ENCODE measurements at regions of chr19 and their contacts with region 1.

Region 1: DNA sequence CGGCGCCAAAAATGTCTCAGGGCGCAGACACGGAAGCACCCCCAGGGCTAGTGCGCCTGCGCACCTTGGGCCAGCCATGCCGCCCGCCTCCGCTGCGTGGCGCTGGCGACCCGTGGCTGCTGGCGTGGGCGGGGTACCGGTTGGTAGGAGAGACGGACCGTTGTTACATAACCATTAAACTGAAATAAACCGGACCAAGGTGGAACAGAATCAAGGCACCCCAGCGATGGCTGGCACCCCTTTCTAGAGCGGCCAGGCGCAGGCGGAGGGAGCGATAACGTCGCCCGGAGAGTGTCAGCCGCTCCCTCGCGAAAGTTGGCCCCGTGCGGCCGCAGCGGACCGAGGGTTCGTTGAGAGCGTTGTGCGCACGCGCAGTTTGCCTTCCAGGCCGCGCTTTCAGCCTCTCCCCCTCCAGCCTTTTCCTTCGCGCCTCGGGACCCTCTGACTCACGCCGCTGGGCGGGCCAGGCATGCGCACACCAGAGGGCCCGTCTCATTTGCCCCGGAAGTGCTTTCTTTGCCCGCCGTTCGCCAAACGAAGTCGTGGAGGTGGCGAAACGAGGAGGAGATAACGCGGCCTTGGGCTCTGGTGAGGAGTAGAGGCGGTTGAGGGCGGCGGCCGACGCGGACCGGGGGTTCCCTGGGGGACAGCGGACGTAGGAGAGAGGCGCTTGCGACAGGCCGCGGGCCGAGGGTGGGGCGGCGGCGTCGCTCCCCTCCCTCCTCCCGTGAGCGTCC is at the starts of genes PLEKHJ1 and SF3A2:
- DNase-seq: peak; percentile 85 to 95 (median 92)
- H3K4me3 ChIP-seq: peak within 1 kb of the TSS; percentile 64 to 99 (median 94)
- H3K27ac ChIP-seq: peak within 1 kb of the TSS; percentile 97 to 100 (median 100)
- H3K27me3 ChIP-seq: no peaks in the 10 kb centered on the region
- CTCF ChIP-seq: peak; percentile 86 to 100 (median 96)
- total RNA-seq, gene PLEKHJ1: 32.8 to 66.7 (median 46.1) TPM
- total RNA-seq, gene SF3A2: 27.0 to 68.4 (median 48.2) TPM

Region 2: GRCh38 chr19:2096480-2097329 is 139.8 kb before region 1 on chr19 and contains the start of gene IZUMO4:
- intact Hi-C with region 1: loop called in 1 of 2 experiments (anchors 2 kb)
- DNase-seq: peak; percentile 97 to 100 (median 99)
- H3K4me3 ChIP-seq: peak within 1 kb of the TSS; percentile 62 to 100 (median 83)
- H3K27ac ChIP-seq: peak within 1 kb of the TSS; percentile 83 to 99 (median 96)
- H3K27me3 ChIP-seq: no peaks in the 10 kb centered on the region
- CTCF ChIP-seq: peak in 53 of 56 donors; percentile 19 to 66 (median 48)
- total RNA-seq, gene IZUMO4: 8.6 to 54.6 (median 25.5) TPM

Region 3: DNA sequence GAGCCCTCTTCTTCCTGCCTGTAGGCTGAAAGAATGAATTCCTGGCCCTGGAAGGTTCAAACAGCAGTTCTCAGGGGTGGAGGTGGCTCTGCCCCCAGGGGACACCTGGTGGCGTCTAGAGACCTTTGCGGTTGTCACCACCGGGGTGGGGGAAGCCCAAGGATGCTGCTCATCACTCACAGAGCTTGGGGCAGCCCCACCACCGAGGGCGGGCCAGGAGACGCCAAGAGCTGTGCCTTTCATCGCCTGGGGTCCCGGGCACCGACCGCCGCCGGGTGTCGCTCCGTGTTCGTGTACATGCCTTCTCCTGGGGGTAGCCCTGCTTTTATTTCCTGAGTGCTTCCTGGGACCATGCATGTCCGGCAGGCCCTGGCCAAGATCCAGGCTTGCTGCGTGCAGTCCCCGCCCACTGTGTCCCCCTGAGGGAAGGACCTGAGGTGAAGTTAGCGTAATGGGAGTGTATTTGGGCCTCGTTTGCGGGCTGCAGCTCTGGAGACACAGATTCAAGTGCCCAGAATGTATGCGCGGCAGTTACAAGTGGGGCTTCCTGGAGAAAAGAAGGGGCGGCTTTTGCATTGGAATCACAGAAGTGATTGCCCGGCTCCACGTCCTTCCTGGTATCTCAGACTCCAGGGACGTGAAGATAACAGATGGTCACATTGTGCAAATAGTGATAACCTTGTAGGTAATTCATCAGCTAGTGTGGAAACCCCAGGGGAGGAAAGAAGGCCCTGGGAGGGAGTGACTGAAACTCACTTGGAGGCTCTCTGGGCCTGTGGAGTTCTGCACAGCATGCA is 64.9 kb before region 1 on chr19:
- intact Hi-C with region 1: loop called in 1 of 2 experiments (anchors 5 kb)
- DNase-seq: no peak
- H3K4me3 ChIP-seq: no peak overlapping the region
- H3K27ac ChIP-seq: peak overlapping the region in 2 of 59 donors; percentile 15 to 21
- H3K27me3 ChIP-seq: no peaks in the 10 kb centered on the region
- CTCF ChIP-seq: no peak

Region 4: GRCh38 chr19:2199215-2199614 is 37.3 kb before region 1 on chr19:
- intact Hi-C with region 1: no loop called
- DNase-seq: no peak
- H3K4me3 ChIP-seq: no peak overlapping the region
- H3K27ac ChIP-seq: peak overlapping the region in 3 of 59 donors; percentile 0 to 27 (median 4)
- H3K27me3 ChIP-seq: no peaks in the 10 kb centered on the region
- CTCF ChIP-seq: peak in 26 of 56 donors; percentile 8 to 53 (median 22)

Region 5: GRCh38 chr19:2261438-2262172 is 25.1 kb after region 1 on chr19:
- intact Hi-C with region 1: no loop called
- DNase-seq: no peak
- H3K4me3 ChIP-seq: no peak overlapping the region
- H3K27ac ChIP-seq: no peak overlapping the region
- H3K27me3 ChIP-seq: no peaks in the 10 kb centered on the region
- CTCF ChIP-seq: peak in 49 of 56 donors; percentile 16 to 59 (median 38)

Region 6: DNA sequence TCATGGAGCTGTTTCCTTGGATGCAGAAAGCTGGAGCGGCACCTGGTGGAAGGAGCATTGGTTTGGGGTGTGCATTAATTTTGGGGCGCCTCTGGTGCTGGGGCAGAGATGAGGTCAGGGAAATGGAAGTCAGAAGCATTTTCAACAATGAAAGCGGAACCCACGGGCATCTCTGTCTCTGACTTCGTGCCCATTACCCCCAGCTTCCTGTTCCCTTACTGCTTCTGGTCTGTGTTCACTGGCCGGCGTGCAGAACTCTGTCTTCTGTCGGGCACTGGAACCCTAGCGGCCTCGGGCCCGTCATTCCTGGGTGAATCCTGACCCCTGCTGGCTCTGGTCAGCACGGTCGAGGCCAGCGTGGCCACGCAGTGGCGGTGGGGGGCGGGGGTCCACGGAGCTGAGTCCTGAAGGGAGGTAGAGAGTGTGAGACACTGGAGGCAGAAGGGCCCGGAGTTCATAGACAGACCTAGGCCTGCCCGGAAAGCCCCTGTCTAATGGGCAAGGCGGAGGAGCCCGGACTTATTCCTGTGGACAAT is 79.4 kb after region 1 on chr19:
- intact Hi-C with region 1: loop called in 1 of 2 experiments (anchors 2 kb)
- DNase-seq: peak in 8 of 10 donors; percentile 61 to 81 (median 74)
- H3K4me3 ChIP-seq: no peak overlapping the region
- H3K27ac ChIP-seq: peak overlapping the region in 18 of 59 donors; percentile 8 to 60 (median 30)
- H3K27me3 ChIP-seq: peaks cover 0 to 10% (median 0%) of the 10 kb centered on the region in 45 donors
- CTCF ChIP-seq: peak; percentile 29 to 88 (median 76)

Region 7: DNA sequence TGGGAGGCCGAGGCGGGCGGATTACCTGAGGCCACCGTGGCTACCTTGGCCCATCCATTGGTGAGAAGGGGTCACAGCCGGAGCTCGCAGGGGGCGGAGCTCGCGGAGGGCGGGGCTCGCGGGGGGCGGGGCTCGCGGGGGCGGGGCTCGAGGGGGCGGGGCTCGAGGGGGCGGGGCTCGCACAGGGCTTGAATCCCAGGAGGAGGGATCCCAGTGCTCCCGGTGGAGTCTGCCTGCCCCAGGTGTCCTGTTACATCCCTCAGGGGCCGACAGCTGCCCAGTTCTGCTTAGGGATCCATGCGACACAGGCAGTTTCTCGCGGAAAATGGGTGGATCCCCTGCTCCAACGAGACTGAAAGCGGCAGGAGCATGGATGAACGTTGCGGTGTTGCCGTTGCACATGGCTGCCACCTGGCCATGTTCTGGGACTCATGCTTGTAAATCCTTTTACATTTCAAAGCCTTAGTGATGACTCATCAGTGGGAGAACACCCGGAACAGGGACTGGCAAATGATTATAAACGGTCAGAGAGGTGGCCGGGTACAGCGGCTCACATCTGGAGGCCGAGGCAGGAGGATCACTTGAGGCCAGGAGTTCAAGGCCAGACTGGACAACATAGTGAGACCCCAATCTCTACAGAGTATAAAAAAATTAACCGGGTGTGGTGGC is 148.7 kb after region 1 on chr19:
- intact Hi-C with region 1: loop called in 1 of 2 experiments (anchors 5 kb)
- DNase-seq: peak in 3 of 10 donors; percentile 7 to 50 (median 20)
- H3K4me3 ChIP-seq: peak overlapping the region in 6 of 59 donors; percentile 7 to 30 (median 13)
- H3K27ac ChIP-seq: no peak overlapping the region
- H3K27me3 ChIP-seq: peaks cover 0 to 9% (median 0%) of the 10 kb centered on the region in 45 donors
- CTCF ChIP-seq: no peak

Region 8: DNA sequence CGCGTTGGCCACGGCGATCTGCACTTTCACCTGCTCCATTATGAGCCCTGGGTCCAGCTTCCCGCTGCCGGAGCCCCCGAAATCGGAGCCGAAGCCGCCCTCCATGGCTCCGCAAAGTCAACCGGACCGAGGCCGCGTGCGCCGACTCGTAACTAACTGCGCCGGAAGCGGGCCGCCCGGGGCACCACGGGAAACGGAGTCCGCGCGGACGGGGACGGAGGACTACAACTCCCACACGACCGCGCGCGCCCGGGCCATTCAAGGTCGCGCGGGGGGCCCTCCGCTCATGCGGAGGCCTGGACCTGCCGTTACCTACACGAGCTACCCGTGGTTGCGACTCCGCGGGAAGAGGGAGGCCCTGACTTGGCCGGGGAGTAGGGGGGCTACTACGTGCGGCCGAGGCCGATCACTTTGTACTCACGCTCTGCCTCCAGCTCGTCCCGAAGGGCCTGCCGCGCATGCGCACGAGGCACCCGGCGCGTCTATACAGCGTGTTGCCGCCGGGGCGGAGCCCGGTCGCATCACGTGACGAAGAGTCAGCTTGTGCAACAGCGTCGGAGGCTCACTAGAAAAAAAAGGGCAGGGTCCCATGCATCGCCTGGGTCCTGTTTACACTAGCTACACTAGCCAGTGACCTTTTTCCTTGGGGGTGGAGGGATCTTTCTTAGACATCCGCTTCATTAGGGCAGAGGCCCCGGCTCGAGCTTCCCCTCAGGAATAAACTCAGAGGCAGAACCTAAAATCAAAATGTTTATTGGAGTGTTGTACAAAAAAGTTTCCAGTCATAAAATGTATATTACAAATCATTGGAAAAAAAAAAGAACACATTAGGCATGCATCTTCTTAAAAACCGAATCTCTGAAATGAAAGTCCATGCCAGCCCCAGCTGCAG is 191.2 kb after region 1 on chr19 and contains the start of gene TIMM13:
- intact Hi-C with region 1: loop called in 1 of 2 experiments (anchors 5 kb)
- DNase-seq: peak; percentile 94 to 99 (median 96)
- H3K4me3 ChIP-seq: peak within 1 kb of the TSS; percentile 62 to 100 (median 96)
- H3K27ac ChIP-seq: peak within 1 kb of the TSS; percentile 79 to 100 (median 98)
- H3K27me3 ChIP-seq: no peaks in the 10 kb centered on the region
- CTCF ChIP-seq: peak in 10 of 56 donors; percentile 2 to 39 (median 16)
- total RNA-seq, gene TIMM13: 36.0 to 71.8 (median 52.0) TPM

Measured in dorsolateral prefrontal cortex (tissue), 120 donors.